Right cardiac atrium (tissue), 5 donors: ENCODE measurements at regions of chr7 and their contacts with region 1.

Region 1: GRCh38 chr7:75957012-75957736 is 37.2 kb downstream of the TMEM120A start:
- DNase-seq: peak in 1 of 3 donors; percentile 51
- ATAC-seq: peak; percentile 13 to 27
- H3K4me3 ChIP-seq: no peak overlapping the region
- H3K27ac ChIP-seq: no peak overlapping the region
- H3K4me1 ChIP-seq: peaks cover 2% of the 10 kb centered on the region
- H3K27me3 ChIP-seq: no peaks in the 10 kb centered on the region

Region 2: DNA sequence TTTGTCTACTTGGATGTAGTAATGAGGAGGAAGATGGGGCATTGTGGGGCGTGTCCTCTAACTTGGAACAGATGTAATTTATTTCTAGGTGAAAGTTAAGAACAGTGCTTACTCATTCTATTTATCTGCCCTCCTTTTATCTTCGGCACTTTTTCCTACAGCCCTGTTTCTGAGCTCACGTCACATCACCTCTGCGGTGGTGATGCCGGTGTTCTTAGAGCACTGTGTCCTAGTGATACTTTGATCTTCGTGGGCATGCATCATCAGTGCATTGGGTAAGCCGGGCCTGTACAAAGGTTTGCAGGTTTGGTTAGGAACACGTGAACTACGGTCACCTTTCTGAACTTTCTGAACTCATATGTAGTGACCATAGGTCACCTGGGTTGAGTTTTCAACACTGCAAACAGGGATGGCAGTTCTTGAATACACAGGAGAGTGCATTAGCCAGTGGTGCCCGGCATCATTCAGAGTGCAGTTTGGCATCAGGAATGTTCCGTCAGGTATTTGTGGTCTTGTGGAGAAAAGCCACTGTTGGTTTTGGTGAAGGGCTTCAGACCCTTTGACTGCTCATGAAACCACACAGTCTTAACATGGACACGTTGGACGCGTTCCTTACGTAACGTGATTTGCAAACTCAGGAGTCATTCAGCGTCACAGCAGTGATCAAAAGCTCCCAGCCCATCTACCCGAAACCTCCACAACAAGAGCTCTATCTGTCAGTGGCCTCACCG is 36.6 kb before region 1 on chr7:
- intact Hi-C with region 1: loop called in 2 of 4 experiments (anchors 5 to 10 kb)
- DNase-seq: no peak
- ATAC-seq: peak; percentile 30 to 64
- H3K4me3 ChIP-seq: no peak overlapping the region
- H3K27ac ChIP-seq: no peak overlapping the region
- H3K4me1 ChIP-seq: peaks cover 8% of the 10 kb centered on the region
- H3K27me3 ChIP-seq: no peaks in the 10 kb centered on the region